ENCODE measurements at regions of chrX and their contacts with region 1.

Region 1: DNA sequence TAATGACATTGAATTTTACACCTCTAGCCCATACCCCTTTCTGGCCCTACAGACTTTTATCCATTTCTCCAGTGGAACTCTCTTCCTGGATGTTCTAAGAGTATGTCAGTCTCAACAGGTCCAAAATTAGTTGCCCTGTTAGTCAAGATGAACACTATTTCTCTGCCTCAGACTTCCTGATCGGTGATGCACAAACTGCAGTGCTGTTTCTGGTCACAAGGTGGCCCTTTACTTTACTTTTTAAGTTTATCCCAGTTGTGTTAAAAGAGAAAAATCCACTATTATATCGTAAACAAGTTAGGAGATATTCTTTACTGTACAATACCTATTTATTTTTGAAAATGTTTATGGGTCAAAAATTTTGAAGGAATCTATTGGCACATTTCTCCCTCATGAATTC is 13.1 kb downstream of the TCEAL7 start:
- DNase-seq: no peak
- H3K4me3 ChIP-seq: no peak overlapping the region
- H3K27ac ChIP-seq: no peak overlapping the region
- H3K4me1 ChIP-seq: no peaks in the 10 kb centered on the region
- H3K27me3 ChIP-seq: no peaks in the 10 kb centered on the region
- CTCF ChIP-seq: peak; percentile 15 to 42 (median 29)
- POLR2A ChIP-seq: no peak

Region 2: GRCh38 chrX:103464774-103465117 is 121.6 kb after region 1 on chrX:
- intact Hi-C with region 1: loop called (anchors 10 kb)
- DNase-seq: no peak
- H3K4me3 ChIP-seq: peak overlapping the region; percentile 5 to 28
- H3K27ac ChIP-seq: no peak overlapping the region
- H3K4me1 ChIP-seq: no peaks in the 10 kb centered on the region
- H3K27me3 ChIP-seq: no peaks in the 10 kb centered on the region
- CTCF ChIP-seq: peak; percentile 8 to 63 (median 13)
- POLR2A ChIP-seq: no peak

Region 3: DNA sequence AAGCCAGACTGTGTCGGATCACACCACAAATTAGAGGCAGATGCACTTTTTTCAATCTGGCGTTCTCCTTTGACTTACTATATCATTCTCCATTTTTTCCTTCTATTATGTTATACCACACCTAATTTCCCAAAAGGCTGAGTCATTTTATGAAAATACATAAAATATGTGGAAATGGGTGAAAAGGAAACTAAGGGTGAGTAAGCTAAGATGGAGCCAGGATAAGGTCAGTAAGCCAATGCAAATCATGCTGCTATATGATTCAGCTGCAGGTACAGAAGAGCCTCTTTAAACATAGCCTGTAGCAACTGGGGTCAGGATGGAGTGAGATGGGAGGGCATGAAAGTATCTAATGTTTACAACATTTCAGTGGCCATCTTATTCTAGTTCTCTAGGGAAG is 1971.4 kb after region 1 on chrX:
- intact Hi-C with region 1: no loop called
- DNase-seq: no peak
- H3K4me3 ChIP-seq: no peak overlapping the region
- H3K27ac ChIP-seq: no peak overlapping the region
- H3K4me1 ChIP-seq: no peaks in the 10 kb centered on the region
- H3K27me3 ChIP-seq: no peaks in the 10 kb centered on the region
- CTCF ChIP-seq: no peak
- POLR2A ChIP-seq: no peak

Measured in vagina (tissue), 2 donors.